ENCODE measurements at regions of chr3 and their contacts with region 1.

Region 1: DNA sequence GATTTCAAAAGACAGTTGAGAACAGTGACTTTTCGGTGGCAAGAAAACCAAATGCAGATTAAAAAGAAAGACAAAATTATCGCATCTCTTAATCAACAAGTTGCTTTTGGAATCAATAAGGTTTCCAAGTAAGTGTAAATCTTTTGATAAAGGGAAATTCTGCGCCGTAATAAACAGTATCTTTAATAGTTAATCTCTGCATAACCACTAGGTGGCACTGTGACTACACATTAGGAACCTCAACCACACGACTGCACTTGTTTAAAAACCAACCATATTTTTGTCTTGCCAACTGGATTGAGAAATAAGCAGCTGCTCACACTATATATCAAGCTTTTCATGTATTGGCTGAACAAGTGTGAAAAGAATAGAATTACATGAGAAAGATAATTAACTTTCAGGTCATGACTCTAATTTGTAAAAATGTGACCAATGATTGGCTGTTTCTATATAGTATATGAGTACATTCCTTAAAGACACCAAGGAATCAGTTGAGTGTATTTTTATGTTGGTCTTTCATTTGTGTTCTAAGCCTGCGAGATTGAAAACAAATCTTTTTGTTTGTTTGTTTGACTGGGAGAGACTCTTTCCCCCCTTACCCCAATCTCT is 72.7 kb downstream of the DZIP3 start:
- DNase-seq: no peak
- H3K4me3 ChIP-seq: no peak overlapping the region
- H3K27ac ChIP-seq: no peak overlapping the region
- H3K4me1 ChIP-seq: no peaks in the 10 kb centered on the region
- H3K27me3 ChIP-seq: no peaks in the 10 kb centered on the region
- CTCF ChIP-seq: peak; percentile 83

Region 2: DNA sequence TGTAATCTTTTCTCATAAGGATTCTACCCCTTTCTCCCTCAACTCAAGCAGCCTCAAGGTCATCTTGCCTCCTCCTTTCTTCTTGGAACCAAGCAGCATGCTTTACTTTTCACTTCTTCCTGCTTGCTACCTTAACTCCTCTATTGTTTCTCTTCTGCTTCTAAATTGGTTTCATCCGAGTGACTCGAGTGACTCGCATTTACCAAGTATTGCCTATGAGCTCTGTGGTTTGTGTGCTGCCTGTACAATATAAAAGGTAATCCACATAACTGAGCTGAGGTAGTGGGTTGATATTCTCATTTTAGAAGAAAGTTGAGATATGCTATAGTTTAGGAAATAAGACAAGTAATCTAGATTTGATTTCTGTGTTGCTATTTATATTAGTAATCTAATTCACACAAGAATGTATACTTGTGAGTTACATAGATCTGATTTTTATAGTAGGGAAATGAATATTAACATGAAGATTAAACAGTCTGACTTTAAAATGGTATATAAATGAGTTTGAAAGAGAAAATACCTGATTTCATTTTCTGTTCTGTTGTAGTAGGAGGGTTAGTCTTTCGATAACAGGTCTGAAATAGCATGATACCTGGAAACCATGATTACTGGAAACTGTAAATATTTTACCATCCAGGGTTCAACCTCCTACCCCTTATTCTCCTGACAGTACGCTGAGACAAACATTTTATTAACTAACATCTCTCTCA is 360.4 kb before region 1 on chr3:
- intact Hi-C with region 1: no loop called
- DNase-seq: no peak
- H3K4me3 ChIP-seq: no peak overlapping the region
- H3K27ac ChIP-seq: no peak overlapping the region
- H3K4me1 ChIP-seq: peaks cover 9% of the 10 kb centered on the region
- H3K27me3 ChIP-seq: no peaks in the 10 kb centered on the region
- CTCF ChIP-seq: no peak

Region 3: DNA sequence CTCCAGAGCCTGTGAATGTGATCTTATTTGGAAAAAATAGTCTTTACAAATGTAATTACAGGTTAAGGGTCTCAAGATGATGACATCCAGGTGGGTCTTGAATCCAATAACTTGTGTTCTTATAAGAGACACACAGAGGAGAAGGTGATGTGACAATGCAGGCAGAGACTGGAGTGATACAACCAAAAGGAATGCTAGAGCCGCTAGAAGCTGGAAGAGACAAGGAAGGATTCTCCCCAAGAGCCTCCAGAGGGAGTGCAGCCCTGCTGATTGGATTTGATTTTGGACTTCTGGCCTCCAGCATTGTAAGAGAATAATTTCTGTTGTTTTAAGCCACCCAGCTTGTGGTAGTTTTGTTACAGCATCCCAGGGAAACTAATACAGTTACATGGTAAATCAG is 161.5 kb before region 1 on chr3:
- intact Hi-C with region 1: no loop called
- DNase-seq: no peak
- H3K4me3 ChIP-seq: no peak overlapping the region
- H3K27ac ChIP-seq: no peak overlapping the region
- H3K4me1 ChIP-seq: no peaks in the 10 kb centered on the region
- H3K27me3 ChIP-seq: no peaks in the 10 kb centered on the region
- CTCF ChIP-seq: no peak

Region 4: GRCh38 chr3:108887121-108887520 is 224.9 kb after region 1 on chr3:
- intact Hi-C with region 1: no loop called
- DNase-seq: no peak
- H3K4me3 ChIP-seq: no peak overlapping the region
- H3K27ac ChIP-seq: no peak overlapping the region
- H3K4me1 ChIP-seq: no peaks in the 10 kb centered on the region
- H3K27me3 ChIP-seq: no peaks in the 10 kb centered on the region
- CTCF ChIP-seq: no peak

Region 5: DNA sequence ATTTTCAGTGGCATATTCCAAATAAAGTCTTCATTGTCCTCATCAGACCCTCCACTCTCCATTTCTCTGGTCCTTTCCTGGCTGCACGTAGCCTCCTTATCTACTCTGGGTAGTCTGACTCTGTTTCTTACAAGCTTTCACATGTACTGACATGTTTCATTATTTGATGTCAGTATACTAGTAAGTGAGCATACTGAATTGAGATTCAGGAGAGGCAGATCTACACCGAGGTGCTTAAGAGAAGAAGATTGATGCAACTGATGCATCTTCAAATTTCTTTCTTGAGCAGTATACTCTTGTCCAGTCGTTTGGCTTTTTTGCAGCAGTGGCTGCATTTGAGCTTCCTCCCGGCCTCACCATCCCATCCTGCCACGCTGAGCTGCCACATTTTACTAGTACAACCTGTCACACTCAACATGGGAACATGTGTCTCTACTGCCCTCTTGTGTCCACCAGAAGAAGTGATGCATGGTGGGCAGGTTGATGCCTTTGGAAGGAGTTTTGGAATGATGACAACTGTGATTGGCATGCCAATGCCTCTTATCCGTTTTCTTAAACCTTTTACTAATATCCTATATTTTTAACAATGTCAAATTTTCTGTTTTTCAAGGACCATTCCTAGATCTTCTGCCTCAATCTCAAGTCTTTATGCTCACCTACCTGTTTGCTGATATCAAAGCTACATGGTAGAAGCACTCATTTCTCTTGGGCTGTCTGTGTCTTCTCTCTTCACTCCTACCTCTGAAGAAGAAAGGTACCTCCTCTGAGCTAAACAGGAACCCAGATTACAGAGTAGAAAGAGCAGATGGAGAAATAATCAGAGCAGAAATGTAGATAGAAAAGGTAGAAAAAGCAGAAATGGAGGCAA is 252.8 kb after region 1 on chr3:
- intact Hi-C with region 1: loop called (anchors 10 kb)
- DNase-seq: no peak
- H3K4me3 ChIP-seq: no peak overlapping the region
- H3K27ac ChIP-seq: no peak overlapping the region
- H3K4me1 ChIP-seq: no peaks in the 10 kb centered on the region
- H3K27me3 ChIP-seq: peaks cover 9% of the 10 kb centered on the region
- CTCF ChIP-seq: peak; percentile 82

Measured in left ventricle myocardium inferior (tissue), 1 donor.